Ascending aorta (tissue), 2 donors: ENCODE measurements at regions of chr10 and their contacts with region 1.

Region 1: GRCh38 chr10:103192451-103193106 is 493 bp downstream of the NT5C2 start:
- DNase-seq: peak; percentile 51 to 91
- H3K4me3 ChIP-seq: peak overlapping the region; percentile 84 to 93
- H3K27ac ChIP-seq: peak overlapping the region; percentile 96 to 99
- H3K4me1 ChIP-seq: peaks cover 4 to 47% of the 10 kb centered on the region in 2 donors
- H3K27me3 ChIP-seq: no peaks in the 10 kb centered on the region
- CTCF ChIP-seq: no peak

Region 2: DNA sequence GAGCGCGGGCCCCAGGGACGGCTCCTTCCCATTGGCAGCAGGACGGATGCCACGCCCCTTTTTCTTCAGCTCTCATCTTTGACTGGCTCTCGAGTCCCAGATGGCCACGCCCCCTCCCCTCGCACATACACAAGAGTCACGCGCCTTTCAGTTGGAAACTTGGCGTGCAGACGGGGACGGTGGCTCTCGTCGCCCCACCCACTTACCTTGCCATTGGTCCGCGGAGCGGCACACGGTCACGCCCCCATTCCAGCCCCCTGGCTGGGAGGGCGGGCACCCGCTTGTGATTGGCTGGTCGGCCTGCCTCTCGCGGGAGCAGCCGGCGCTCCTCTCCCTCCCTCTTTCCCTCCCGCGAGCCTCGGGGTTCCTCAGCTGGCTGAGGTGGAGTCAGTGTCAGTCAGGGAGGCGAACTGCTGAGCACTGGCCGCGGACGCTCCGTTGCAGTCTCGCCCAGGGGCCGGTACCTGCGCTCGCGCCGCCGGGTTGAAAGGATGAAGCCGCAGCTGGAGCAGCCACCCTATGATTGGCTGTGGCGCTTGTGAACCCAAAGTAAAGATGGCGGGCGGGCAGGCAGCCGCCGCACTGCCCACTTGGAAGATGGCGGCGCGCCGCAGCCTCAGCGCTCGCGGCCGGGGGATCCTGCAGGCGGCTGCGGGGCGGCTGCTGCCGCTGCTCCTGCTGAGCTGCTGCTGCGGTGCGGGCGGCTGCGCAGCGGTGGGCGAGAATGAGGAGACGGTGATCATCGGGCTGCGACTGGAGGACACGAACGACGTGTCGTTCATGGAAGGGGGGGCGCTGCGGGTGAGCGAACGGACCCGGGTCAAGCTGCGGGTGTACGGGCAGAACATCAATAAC is 274.4 kb before region 1 on chr10 and contains the start of gene CNNM2:
- intact Hi-C with region 1: loop called (anchors 2 kb)
- DNase-seq: peak; percentile 100
- H3K4me3 ChIP-seq: peak within 1 kb of the TSS; percentile 71 to 89
- H3K27ac ChIP-seq: peak within 1 kb of the TSS; percentile 79 to 94
- H3K4me1 ChIP-seq: peaks cover 0 to 7% of the 10 kb centered on the region in 2 donors
- H3K27me3 ChIP-seq: no peaks in the 10 kb centered on the region
- CTCF ChIP-seq: no peak
- total RNA-seq, gene CNNM2: 18.7 TPM

Region 3: DNA sequence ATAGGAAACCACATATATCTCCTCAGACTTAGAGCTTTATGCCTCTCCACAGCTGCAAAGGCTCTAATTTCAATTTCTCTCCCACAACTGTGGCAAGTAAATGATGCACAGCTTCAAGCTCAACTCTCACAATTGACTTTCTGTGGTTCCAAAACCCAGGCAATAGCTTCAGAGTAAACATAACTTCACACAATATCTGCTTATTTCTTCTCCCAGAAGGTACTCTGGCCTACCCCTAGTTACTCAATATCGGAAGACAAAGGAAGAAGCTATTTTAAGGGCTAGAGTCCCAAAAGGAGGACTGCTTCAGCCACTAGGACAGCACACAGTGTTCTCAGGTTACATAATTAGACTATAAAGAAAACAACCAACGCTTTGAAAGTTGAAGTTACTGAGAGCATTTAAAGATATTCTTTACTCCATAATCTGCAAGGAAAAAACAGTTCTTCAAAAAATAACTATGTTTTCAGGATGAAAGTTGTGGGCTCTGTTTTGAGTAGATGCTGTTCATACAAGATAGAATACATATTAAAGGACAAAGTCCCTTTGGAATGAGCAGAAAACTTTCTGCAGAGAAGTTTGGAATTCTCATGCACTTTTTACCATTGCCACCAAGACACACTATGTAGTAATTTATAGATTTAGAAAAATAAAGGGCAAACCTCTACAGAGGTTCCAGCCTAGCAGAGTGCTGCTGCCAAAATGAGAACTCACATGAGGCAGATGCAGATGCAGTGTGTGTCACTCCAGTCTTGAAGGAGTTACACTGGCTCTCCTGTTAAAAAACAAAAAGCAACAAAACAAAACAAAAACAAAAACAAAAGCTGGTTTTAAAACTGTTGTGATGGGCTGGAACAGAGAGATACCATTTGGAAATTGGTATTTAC is 81.3 kb before region 1 on chr10:
- intact Hi-C with region 1: loop called (anchors 1 kb)
- DNase-seq: no peak
- H3K4me3 ChIP-seq: peak overlapping the region in 1 of 2 donors; percentile 11
- H3K27ac ChIP-seq: peak overlapping the region; percentile 66 to 83
- H3K4me1 ChIP-seq: peaks cover 22 to 56% of the 10 kb centered on the region in 2 donors
- H3K27me3 ChIP-seq: no peaks in the 10 kb centered on the region
- CTCF ChIP-seq: no peak

Region 4: GRCh38 chr10:103153302-103154197 is 39.0 kb before region 1 on chr10:
- intact Hi-C with region 1: loop called (anchors 5 kb)
- DNase-seq: no peak
- H3K4me3 ChIP-seq: peak overlapping the region in 1 of 2 donors; percentile 42
- H3K27ac ChIP-seq: peak overlapping the region; percentile 71 to 85
- H3K4me1 ChIP-seq: peaks cover 0 to 38% of the 10 kb centered on the region in 2 donors
- H3K27me3 ChIP-seq: no peaks in the 10 kb centered on the region
- CTCF ChIP-seq: no peak

Region 5: GRCh38 chr10:103231047-103231551 is 38.5 kb after region 1 on chr10:
- intact Hi-C with region 1: loop called (anchors 2 kb)
- DNase-seq: peak in 1 of 2 donors; percentile 85
- H3K4me3 ChIP-seq: no peak overlapping the region
- H3K27ac ChIP-seq: peak overlapping the region; percentile 81 to 82
- H3K4me1 ChIP-seq: peaks cover 4 to 27% of the 10 kb centered on the region in 2 donors
- H3K27me3 ChIP-seq: no peaks in the 10 kb centered on the region
- CTCF ChIP-seq: no peak

Region 6: DNA sequence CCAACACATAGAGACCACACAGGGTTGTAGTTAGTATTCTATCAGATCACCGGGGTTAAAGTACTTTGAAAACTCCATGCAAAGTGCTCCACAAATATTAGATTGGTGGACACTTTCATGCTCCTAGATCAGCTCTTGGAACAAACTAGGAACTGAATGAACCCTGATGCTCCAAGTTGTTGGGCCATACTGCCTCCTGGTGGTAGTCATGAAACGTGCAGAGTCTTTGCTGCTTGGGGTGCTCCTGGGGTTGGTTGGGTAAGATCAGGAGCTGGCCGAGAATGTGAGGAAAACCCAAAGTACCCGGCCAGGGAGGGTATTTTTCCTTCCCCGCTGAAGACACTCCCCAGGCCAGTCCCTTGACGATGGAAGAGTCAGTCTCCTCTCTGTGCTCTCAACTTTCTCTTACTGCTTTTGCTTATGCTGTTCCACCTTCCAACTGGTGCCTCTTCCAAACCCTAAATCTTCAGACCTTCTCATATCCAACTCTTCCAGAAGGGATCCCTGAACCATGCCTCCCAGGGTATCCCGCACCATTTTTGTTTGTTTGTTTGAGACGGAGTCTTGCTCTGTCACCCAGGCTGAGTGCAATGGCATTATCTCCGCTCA is 52.2 kb after region 1 on chr10:
- intact Hi-C with region 1: loop called (anchors 1 kb)
- DNase-seq: peak; percentile 14 to 87
- H3K4me3 ChIP-seq: no peak overlapping the region
- H3K27ac ChIP-seq: no peak overlapping the region
- H3K4me1 ChIP-seq: peaks cover 4 to 11% of the 10 kb centered on the region in 2 donors
- H3K27me3 ChIP-seq: no peaks in the 10 kb centered on the region
- CTCF ChIP-seq: peak; percentile 84 to 92 (median 84)

Region 7: DNA sequence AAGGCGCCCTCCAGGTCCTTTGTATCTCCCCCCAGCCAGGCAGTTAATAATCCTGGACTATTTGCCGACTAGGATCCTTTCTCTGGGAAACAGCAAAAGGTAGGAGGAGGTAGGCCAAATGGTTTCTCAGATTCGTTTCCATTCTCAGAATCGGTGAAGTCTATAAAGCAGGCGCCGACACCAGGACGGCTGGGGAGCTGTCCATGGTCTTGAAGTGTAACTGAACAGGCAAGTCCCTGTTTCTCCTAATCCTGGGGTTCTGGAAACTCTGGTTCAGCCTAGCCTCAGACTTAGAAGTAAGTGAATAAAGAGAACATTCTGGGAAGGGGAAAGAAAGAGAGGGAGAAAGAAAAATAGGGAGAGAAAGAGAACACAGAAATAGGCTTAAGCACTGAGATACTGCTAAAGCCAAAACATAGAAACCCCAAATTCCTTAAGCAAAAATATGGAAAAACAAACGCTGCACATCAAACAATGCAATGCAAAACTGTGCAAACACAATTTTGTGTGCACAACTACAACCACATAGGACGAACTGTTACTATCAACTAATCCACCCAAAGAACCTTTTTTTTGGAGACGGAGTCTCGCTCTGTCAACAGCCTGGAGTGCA is 73.2 kb after region 1 on chr10:
- intact Hi-C with region 1: no loop called
- DNase-seq: peak in 1 of 2 donors; percentile 68
- H3K4me3 ChIP-seq: no peak overlapping the region
- H3K27ac ChIP-seq: no peak overlapping the region
- H3K4me1 ChIP-seq: no peaks in the 10 kb centered on the region
- H3K27me3 ChIP-seq: no peaks in the 10 kb centered on the region
- CTCF ChIP-seq: no peak